ENCODE measurements at regions of chr22 and their contacts with region 1.

Region 1: DNA sequence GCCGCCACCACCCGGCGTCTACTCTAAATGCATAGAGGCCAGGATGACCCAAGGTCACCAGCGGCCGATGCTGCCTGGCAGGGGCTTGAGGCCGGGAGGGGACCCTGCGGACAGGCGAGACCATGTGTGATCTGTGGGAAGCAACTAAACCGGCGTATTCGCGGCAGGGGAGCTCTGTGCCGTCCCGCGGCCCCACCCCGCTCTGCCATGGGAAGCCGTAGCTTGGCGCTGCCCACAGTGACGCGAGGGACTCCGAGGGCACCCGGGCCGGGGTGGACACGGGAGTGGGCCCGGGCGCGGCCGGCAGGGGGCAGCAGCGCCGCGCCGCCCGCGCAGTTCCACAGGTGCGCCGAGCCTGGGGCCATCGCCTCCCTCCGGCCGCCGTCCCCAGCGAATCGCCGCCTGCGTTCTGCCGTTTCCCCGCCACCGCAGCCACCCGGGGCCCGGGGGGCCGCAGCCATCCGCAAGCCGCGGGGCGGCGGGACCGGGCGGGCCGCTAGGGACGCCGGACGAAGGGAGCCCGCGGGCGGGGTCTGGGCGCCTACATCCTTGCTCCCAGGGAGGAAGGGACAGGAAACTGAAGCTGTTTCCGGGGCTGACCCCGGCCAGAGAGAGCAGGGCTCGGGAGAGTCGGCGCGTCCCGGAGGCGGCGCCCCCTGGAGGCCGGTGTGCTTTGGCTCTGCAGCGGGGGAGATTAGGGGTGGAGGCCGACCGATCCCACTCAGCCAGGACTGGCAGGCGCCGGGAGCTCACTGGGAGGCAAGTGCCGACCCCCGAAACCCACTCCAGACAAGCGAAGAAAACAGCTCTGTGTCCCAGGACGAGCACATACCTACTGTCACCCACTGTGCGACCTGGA is 12.5 kb upstream of the HDHD5 start:
- DNase-seq: no peak
- ATAC-seq: peak; percentile 97
- H3K4me3 ChIP-seq: peak overlapping the region; percentile 86
- H3K27ac ChIP-seq: peak overlapping the region; percentile 81
- H3K4me1 ChIP-seq: peaks cover 6% of the 10 kb centered on the region
- H3K27me3 ChIP-seq: no peaks in the 10 kb centered on the region
- CTCF ChIP-seq: peak; percentile 82 to 96 (median 85)
- EP300 ChIP-seq: no peak
- POLR2A ChIP-seq: peak; percentile 63; the same call in 1 of the 2 replicates
- RAD21 ChIP-seq: peak; percentile 65

Region 2: DNA sequence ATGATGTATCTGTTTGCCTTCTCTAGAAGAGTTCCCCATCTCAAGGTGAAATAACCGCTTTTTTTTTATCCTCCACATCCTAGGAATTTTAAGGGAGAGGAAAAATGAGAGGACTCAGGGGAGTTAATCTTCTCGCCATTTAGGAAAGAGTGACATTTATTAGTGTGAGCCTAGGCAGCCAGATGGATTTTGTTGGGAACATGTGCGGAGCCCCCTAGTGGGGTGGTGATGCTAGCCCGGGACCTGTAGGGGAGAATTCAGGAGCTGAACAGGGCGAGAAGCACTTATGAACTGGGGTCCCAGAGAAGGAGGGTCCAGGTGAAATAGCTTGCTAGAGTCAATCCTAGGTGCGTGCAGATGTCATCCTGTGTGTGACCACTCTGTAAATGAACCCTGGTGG is 76.0 kb before region 1 on chr22:
- CTCF ChIA-PET with region 1: interaction called, 10 read pairs
- POLR2A ChIA-PET with region 1: no interaction called
- RAD21 ChIA-PET with region 1: no interaction called
- SMC1A ChIA-PET with region 1: no interaction called
- in situ Hi-C with region 1: no loop called
- intact Hi-C with region 1: no loop called
- DNase-seq: no peak
- ATAC-seq: no peak
- H3K4me3 ChIP-seq: no peak overlapping the region
- H3K27ac ChIP-seq: no peak overlapping the region
- H3K4me1 ChIP-seq: peaks cover 19% of the 10 kb centered on the region
- H3K27me3 ChIP-seq: no peaks in the 10 kb centered on the region
- CTCF ChIP-seq: peak in 2 of 3 experiments; percentile 22 to 25; a peak in 2 of 6 replicates
- EP300 ChIP-seq: no peak
- POLR2A ChIP-seq: no peak
- RAD21 ChIP-seq: no peak

Region 3: DNA sequence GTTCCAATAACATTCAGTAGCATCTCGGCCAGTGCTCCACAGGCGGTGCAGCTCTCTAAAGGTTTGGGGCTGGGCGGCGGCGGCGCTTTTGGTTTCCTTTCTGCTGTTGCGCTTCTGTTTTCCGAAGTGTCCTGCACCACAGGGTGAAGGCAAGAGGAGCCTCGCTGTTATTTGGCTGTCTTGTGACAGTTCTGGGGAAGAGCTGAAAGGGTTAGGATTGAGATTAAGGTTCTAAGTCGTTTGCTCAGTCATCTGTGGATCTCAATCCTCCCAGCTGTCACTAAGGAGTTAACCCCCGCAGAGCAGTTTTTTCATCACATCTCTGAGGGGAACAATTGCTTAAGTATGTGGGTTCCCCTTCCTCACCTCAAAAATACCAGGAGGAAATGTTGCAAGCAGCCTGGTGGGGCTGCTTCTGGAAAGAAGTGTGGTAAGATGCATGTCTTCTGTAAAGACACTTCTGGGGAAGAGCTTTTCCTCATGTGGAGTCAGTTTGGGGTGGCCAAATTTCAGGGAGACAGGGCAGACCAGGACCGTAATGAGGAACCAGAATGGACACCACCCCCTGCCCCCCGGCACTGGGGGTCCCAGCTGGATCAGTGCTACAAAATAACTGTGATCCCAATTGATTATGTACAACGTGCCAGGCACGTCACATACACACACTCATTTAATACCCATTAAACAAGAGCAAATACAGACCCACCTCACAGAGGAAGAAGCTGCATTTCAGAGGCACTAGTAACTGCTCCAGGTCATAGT is 64.6 kb before region 1 on chr22:
- CTCF ChIA-PET with region 1: no interaction called
- POLR2A ChIA-PET with region 1: no interaction called
- RAD21 ChIA-PET with region 1: no interaction called
- SMC1A ChIA-PET with region 1: no interaction called
- in situ Hi-C with region 1: no loop called
- intact Hi-C with region 1: no loop called
- DNase-seq: no peak
- ATAC-seq: peak; percentile 21; the same call in 1 of the 3 replicates
- H3K4me3 ChIP-seq: no peak overlapping the region
- H3K27ac ChIP-seq: no peak overlapping the region
- H3K4me1 ChIP-seq: no peaks in the 10 kb centered on the region
- H3K27me3 ChIP-seq: no peaks in the 10 kb centered on the region
- CTCF ChIP-seq: no peak
- EP300 ChIP-seq: no peak
- POLR2A ChIP-seq: no peak
- RAD21 ChIP-seq: no peak

Region 4: DNA sequence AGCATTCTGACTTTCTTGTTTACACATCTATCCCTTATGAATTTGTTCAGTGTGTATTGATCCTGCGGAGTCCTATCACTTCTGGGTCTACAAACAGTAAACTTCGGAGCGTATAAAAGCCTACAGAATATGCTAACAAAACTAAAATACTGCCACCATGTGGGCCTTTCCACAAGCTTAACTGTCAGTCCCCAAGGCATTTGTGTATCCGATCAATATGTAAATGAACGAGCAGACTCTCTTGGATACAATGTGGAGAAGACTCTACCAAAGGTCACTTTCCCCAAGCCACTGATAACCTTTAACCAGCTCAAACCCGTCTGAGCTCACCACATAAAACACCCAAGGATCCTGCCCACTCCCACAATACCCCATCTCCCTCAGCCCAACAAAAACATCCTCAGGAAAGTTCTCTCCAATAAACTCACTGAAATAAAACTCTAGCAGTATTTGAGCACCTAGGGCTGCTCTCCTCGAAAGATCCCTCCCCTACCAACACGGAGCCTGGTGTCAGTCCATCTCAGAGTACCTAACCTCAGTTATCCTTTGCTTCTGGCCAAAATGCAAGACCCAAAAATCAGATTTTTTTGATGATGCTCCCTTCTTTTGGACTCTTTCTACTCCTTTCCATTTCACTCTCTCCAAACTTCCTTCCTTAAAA is 29.9 kb after region 1 on chr22:
- CTCF ChIA-PET with region 1: interaction called, 21 read pairs
- POLR2A ChIA-PET with region 1: no interaction called
- RAD21 ChIA-PET with region 1: interaction called, 16 read pairs
- SMC1A ChIA-PET with region 1: interaction called, 9 read pairs
- in situ Hi-C with region 1: no loop called
- intact Hi-C with region 1: no loop called
- DNase-seq: no peak
- ATAC-seq: no peak
- H3K4me3 ChIP-seq: no peak overlapping the region
- H3K27ac ChIP-seq: no peak overlapping the region
- H3K4me1 ChIP-seq: no peaks in the 10 kb centered on the region
- H3K27me3 ChIP-seq: no peaks in the 10 kb centered on the region
- CTCF ChIP-seq: no peak
- EP300 ChIP-seq: no peak
- POLR2A ChIP-seq: no peak
- RAD21 ChIP-seq: no peak

Region 5: DNA sequence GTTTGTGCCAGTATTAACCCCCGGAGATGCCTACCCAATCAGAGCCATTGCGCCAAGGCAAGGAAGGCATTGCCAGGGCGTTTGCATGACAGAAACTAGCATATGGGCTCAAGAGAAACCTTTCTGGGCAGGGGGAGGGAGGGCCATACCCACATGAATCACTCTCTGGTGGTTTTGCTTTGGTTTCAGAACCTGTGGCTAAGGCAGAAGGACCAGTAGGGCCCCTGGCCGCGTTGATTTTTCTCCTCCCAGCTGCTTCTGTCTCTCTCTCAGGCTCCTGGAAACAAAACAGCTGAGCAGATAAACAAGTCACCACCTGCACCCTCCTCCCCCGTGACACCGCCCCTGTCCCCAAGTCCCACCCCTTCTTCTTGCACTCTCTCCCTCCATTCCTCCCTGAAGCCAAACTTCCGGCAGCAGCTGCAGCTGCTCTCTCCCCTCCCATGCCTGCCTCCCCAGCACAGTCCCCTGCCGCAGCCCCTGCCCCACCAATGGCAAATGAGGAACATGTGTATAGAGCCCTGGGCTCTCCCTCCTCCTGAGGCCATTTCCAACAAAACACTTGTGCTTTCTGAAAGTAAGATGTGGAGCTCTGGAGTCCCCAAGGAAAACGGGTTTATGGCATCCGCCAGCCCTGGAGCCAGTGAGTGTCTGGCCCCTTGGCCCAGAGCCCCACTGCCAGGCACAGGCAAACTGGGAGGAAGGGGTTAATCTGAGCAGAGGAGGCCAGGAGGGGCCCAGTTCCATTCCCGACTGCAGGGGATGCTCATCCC is 86.7 kb after region 1 on chr22:
- CTCF ChIA-PET with region 1: interaction called, 17 read pairs
- POLR2A ChIA-PET with region 1: interaction called, 3 read pairs
- RAD21 ChIA-PET with region 1: interaction called, 4 read pairs
- SMC1A ChIA-PET with region 1: interaction called, 3 read pairs
- in situ Hi-C with region 1: no loop called
- intact Hi-C with region 1: no loop called
- DNase-seq: peak; percentile 98
- ATAC-seq: peak; percentile 96
- H3K4me3 ChIP-seq: 0 out of 2 replicates have a peak overlapping the region, but pooled peaks have one; percentile 28
- H3K27ac ChIP-seq: peak overlapping the region; percentile 81
- H3K4me1 ChIP-seq: peaks cover 24% of the 10 kb centered on the region
- H3K27me3 ChIP-seq: no peaks in the 10 kb centered on the region
- CTCF ChIP-seq: no peak
- EP300 ChIP-seq: peak; percentile 83 to 92
- POLR2A ChIP-seq: no peak
- RAD21 ChIP-seq: peak; percentile 6; the same call in 1 of the 2 replicates

Region 6: DNA sequence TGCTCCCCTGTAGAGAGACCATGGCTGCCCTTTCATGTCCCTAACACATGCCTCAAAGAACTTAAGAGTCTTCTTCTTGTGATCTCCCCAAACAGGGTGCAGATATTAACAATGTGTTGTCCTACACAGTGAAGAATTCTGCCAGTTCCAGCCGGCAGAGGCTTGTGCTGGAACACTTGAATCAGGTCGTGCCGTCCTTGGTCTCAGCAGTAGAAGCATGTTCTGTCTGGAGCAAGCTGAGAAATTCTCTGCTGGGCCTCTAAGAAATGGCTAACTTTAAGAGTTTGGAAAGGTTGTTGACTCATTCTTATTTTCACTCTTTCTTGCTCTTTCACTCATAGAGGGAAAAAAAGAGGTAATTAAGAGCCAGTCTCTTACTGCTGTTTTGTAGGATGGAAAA is 320.7 kb after region 1 on chr22:
- CTCF ChIA-PET with region 1: interaction called, 15 read pairs
- POLR2A ChIA-PET with region 1: no interaction called
- RAD21 ChIA-PET with region 1: interaction called, 12 read pairs
- SMC1A ChIA-PET with region 1: no interaction called
- in situ Hi-C with region 1: no loop called
- intact Hi-C with region 1: no loop called
- DNase-seq: no peak
- ATAC-seq: no peak
- H3K4me3 ChIP-seq: no peak overlapping the region
- H3K27ac ChIP-seq: no peak overlapping the region
- H3K4me1 ChIP-seq: no peaks in the 10 kb centered on the region
- H3K27me3 ChIP-seq: no peaks in the 10 kb centered on the region
- CTCF ChIP-seq: no peak
- EP300 ChIP-seq: no peak
- POLR2A ChIP-seq: no peak
- RAD21 ChIP-seq: no peak

Region 7: DNA sequence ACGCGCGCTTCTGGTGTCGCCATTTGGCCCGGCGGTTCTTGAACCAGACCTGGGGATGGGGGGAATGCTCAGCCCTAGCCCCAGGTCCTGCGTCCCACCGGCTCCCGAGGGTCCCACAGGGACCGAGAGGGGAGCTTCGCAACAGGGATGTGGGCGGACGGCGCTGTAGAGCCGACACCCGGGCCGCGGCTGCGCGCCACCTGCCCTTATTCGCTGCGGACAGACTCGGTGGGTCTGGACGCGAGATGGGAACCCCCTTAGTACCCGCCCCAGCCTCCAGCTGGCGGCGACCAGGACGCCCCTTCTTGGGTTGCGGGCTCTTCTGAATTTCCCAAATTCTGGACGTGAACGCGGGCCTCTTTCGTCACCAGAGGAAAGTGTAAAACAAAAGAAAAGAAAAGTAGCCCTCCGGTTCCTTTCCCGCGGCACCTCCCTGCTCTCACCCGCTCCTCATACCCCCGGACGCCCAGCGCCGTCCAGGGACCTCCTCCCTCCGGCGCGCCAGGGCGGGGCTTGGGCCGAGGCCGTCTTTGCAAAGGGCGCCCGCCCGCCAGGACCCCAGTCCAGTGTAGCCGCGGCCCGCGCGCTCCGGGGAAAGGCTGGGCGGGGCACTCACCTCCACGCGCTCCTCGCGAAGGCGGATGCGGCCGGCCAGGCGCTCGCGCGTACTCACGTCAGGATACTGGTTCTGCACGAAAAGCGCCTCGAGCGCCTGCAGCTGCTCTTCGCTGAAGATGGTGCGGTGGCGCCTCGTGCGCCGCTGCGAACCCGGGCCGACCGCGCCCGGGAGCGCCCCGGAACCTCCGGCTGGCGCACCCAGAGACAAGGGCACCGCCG is 1977.7 kb after region 1 on chr22:
- CTCF ChIA-PET with region 1: no interaction called
- POLR2A ChIA-PET with region 1: no interaction called
- RAD21 ChIA-PET with region 1: no interaction called
- SMC1A ChIA-PET with region 1: no interaction called
- in situ Hi-C with region 1: no loop called
- intact Hi-C with region 1: no loop called
- DNase-seq: no peak
- ATAC-seq: no peak
- H3K4me3 ChIP-seq: no peak overlapping the region
- H3K27ac ChIP-seq: no peak overlapping the region
- H3K4me1 ChIP-seq: no peaks in the 10 kb centered on the region
- H3K27me3 ChIP-seq: peaks cover 5 to 18% of the 10 kb centered on the region in 2 experiments
- CTCF ChIP-seq: no peak
- EP300 ChIP-seq: no peak
- POLR2A ChIP-seq: no peak
- RAD21 ChIP-seq: no peak

Measured in GM12878 (cell line).